H1 (cell line): ENCODE measurements at regions of chr7 and their contacts with region 1.

Region 1: DNA sequence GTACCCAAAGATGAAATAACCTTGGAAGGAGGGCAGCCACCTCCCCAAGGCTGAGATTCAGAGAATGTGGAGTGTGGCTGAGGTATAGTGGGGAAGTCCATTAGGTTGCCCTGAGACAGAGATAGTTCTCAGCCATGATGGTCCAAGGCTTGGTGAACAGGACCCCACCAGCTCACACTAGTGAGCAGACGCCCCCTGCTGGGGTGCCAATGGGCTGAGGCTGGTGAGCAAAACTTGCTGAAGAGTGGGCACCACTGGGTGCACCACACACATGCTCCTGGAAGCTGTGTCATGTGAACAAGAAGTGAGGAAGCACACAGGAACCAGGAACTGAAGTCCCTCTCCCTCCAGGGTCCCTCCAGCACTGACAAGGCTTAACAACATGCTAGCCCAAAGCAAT is 8.9 kb downstream of the FBXL13 start:
- DNase-seq: peak in 1 of 2 experiments; percentile 70
- H3K4me3 ChIP-seq: no peak overlapping the region
- H3K27ac ChIP-seq: no peak overlapping the region
- H3K4me1 ChIP-seq: no peaks in the 10 kb centered on the region; a peak in 1 of 7 replicates
- H3K27me3 ChIP-seq: no peaks in the 10 kb centered on the region
- CTCF ChIP-seq: peak; percentile 51 to 60 (median 57)
- EP300 ChIP-seq: no peak
- POLR2A ChIP-seq: no peak
- RAD21 ChIP-seq: peak; percentile 56 to 72; a peak in 3 of 4 replicates

Region 2: GRCh38 chr7:102933763-102934162 is 131.9 kb before region 1 on chr7:
- CTCF ChIA-PET with region 1: interaction called, 10 read pairs
- POLR2A ChIA-PET with region 1: no interaction called
- DNase-seq: peak; percentile 34 to 60
- H3K4me3 ChIP-seq: peak overlapping the region in 1 of 4 experiments; percentile 33; a peak in 2 of 8 replicates
- H3K27ac ChIP-seq: peak overlapping the region; percentile 44
- H3K4me1 ChIP-seq: peaks cover 8 to 32% (median 26%) of the 10 kb centered on the region in 4 experiments
- H3K27me3 ChIP-seq: no peaks in the 10 kb centered on the region
- CTCF ChIP-seq: no peak
- EP300 ChIP-seq: no peak
- POLR2A ChIP-seq: peak in 1 of 2 experiments; percentile 42; a peak in 1 of 3 replicates
- RAD21 ChIP-seq: 0 out of 4 replicates have a peak, but pooled peaks of 1 of the 2 experiments have one; percentile 8

Region 3: DNA sequence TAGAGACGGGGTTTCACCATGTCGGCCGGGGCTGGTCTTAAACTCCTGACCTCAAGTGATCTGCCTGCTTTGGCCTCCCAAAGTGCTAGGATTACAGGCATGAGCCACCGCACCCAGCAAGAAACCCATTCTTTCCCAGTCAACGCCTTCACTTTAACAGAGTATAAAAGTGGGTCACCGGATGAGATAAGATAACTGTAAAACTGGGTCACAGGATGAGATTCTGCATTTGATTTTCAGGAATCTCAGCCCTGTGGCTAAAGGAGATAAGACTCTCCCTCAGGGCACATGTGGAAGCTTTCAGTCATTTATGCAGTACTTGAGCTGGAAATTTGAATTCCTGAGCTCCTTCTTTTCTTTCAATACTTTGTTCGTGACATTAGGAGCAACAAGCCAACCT is 82.1 kb before region 1 on chr7:
- CTCF ChIA-PET with region 1: no interaction called
- POLR2A ChIA-PET with region 1: no interaction called
- DNase-seq: no peak
- H3K4me3 ChIP-seq: no peak overlapping the region
- H3K27ac ChIP-seq: no peak overlapping the region
- H3K4me1 ChIP-seq: no peaks in the 10 kb centered on the region
- H3K27me3 ChIP-seq: no peaks in the 10 kb centered on the region; a peak in 1 of 7 replicates
- CTCF ChIP-seq: no peak
- EP300 ChIP-seq: no peak
- POLR2A ChIP-seq: no peak
- RAD21 ChIP-seq: no peak

Region 4: DNA sequence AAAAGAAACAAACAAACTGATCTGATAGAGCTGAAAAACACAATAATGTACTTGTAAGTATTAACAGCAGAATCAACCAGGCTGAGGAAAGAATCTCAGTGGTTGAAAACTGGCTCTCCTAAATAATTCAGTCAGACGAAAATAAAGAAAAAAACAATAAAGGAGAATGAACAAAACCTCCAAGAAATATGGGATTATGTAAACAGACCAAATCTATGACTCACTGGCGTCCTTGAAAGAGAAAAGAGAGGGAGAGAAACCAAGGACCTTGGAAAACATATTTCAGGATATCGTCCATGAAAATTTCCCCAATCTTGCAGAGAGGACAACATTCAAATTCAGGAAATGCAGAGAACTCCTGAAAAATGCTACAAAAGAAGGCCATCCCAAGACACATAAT is 54.0 kb before region 1 on chr7:
- CTCF ChIA-PET with region 1: no interaction called
- POLR2A ChIA-PET with region 1: no interaction called
- DNase-seq: no peak
- H3K4me3 ChIP-seq: no peak overlapping the region
- H3K27ac ChIP-seq: no peak overlapping the region
- H3K4me1 ChIP-seq: no peaks in the 10 kb centered on the region
- H3K27me3 ChIP-seq: no peaks in the 10 kb centered on the region
- CTCF ChIP-seq: no peak
- EP300 ChIP-seq: no peak
- POLR2A ChIP-seq: no peak
- RAD21 ChIP-seq: no peak

Region 5: DNA sequence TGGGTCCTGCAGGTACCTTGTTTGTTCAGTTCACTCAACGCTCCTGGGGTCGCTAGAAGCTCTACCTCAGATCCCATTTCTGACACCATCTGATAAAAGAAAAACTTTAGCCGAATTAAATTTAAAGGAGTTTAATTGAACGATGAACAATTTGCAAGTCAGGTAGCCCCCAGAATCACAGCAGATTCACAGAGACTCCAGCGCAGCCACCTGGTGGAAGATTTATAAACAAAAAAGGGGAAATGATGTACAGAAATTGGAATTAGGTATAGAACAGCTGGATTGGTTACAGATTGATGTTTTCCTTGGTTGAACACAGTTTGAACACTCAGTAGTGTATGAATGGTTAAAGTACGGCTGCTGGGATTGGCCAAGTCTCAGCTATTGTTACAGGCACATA is 14.1 kb before region 1 on chr7:
- CTCF ChIA-PET with region 1: interaction called, 15 read pairs
- POLR2A ChIA-PET with region 1: no interaction called
- DNase-seq: no peak
- H3K4me3 ChIP-seq: no peak overlapping the region
- H3K27ac ChIP-seq: no peak overlapping the region
- H3K4me1 ChIP-seq: no peaks in the 10 kb centered on the region
- H3K27me3 ChIP-seq: no peaks in the 10 kb centered on the region
- CTCF ChIP-seq: no peak
- EP300 ChIP-seq: no peak
- POLR2A ChIP-seq: no peak
- RAD21 ChIP-seq: no peak

Region 6: DNA sequence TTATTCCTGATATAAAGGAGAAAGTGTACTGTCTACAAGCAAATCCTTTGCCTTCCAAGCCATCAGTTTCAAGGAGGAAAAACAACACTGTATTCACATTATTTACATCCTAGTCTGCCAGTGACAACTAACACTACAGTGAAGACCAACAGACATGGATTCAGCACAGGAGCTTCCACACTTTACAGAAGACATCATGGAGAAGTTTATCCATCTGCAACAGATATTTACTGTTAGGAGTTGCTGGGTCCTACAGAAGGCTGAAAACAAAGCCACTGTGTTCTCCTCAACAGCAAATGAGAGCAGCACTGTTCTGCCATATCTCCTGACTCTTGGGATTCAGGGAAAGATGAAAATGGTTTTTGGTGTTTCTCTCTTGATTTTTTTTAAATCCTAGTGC is 51.3 kb after region 1 on chr7:
- CTCF ChIA-PET with region 1: no interaction called
- POLR2A ChIA-PET with region 1: no interaction called
- DNase-seq: no peak
- H3K4me3 ChIP-seq: no peak overlapping the region
- H3K27ac ChIP-seq: no peak overlapping the region
- H3K4me1 ChIP-seq: no peaks in the 10 kb centered on the region
- H3K27me3 ChIP-seq: no peaks in the 10 kb centered on the region
- CTCF ChIP-seq: no peak
- EP300 ChIP-seq: no peak
- POLR2A ChIP-seq: no peak
- RAD21 ChIP-seq: no peak